ENCODE measurements at regions of chr2 and their contacts with region 1.

Region 1: GRCh38 chr2:102350137-102350793 is 5.3 kb upstream of the IL18R1 start:
- DNase-seq: no peak
- H3K4me3 ChIP-seq: no peak overlapping the region
- CTCF ChIP-seq: no peak

Region 2: GRCh38 chr2:102251042-102251848 is 99.0 kb before region 1 on chr2:
- in situ Hi-C with region 1: loop called (anchors 5 kb)
- DNase-seq: no peak
- H3K4me3 ChIP-seq: peak overlapping the region; percentile 24
- CTCF ChIP-seq: peak; percentile 60

Region 3: GRCh38 chr2:102301867-102302362 is 48.4 kb before region 1 on chr2:
- in situ Hi-C with region 1: no loop called
- DNase-seq: no peak
- H3K4me3 ChIP-seq: no peak overlapping the region
- CTCF ChIP-seq: peak; percentile 14